ENCODE measurements at regions of chr3 and their contacts with region 1.

Region 1: DNA sequence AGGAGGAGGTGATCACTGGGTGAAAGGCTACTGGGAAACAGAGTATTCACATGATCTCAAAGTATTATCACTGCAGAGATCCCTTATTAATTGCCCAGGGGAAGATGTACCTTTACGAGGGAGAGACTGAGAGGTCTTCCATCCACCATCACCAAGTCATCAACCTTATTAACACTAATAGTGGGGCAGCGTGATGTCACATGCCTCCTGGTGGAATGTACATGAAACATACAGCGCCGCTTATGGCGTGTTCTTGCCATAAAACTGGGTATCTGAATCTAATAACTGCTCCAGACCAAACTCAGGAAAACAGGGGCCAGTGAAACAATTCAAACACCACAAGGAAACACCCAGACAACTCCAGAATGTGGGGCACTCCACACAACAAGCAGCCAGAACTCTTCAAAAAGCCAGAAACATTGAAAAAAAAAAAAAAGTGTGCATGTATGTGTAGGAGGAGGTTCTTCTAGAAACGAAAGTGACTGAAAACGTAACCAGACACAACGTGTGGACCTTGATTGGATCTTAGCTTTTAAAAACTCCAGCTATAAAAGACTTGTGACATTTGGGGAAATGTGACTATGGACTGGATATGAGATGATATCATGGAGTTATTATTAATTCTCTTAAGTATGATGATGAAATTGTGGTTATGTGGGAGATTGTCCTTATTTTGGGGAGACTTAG is 4.6 kb downstream of the STIMATE start:
- DNase-seq: no peak
- H3K4me3 Mint-ChIP-seq: peak overlapping the region; percentile 70
- H3K27ac Mint-ChIP-seq: peak overlapping the region; percentile 89
- H3K4me1 Mint-ChIP-seq: peaks cover 61% of the 10 kb centered on the region
- H3K27me3 Mint-ChIP-seq: no peaks in the 10 kb centered on the region

Region 2: GRCh38 chr3:52880474-52880873 is 12.3 kb before region 1 on chr3:
- CTCF ChIA-PET with region 1: interaction called, 19 read pairs
- DNase-seq: no peak
- H3K4me3 Mint-ChIP-seq: no peak overlapping the region
- H3K27ac Mint-ChIP-seq: no peak overlapping the region
- H3K4me1 Mint-ChIP-seq: peaks cover 5% of the 10 kb centered on the region
- H3K27me3 Mint-ChIP-seq: no peaks in the 10 kb centered on the region

Region 3: DNA sequence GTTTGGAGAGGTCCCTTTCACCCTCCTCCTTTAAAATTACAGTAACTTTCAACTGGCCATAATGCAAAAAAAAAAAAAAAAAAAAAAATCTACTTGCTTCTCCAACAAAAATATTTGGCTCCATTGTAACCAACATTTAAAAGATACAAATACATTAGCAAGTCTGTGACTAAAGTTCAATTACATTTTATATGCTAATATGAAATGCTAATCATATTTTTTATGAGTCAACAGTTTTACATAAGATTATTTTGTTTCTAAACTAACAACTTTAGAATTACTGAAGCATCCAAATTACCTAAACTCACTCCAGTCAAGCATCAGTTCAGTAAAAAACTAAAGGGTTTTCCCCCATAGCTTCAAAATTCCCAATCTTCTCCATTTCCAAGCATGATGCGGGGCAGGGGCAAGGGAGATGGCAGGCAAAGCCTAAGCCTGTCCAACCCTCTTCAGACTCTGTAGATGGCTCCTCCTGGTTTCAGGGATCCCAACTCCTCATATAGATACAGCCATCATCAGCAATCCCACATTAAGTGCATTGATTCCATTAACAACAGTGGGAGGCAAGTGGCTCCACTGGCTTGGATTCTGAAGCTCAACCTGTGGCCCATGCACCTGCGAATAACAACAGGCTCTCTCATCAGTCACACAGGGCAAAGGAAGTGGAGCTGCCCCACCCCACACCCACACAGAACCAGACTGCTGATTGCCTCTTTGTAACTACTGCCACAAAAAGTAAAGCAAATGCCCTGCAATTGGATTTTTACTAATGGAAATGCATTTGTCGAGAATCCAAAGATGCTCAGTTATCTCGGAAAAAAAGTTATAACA is 138.1 kb after region 1 on chr3:
- CTCF ChIA-PET with region 1: no interaction called
- DNase-seq: peak; percentile 61
- H3K4me3 Mint-ChIP-seq: no peak overlapping the region
- H3K27ac Mint-ChIP-seq: no peak overlapping the region
- H3K4me1 Mint-ChIP-seq: peaks cover 36% of the 10 kb centered on the region
- H3K27me3 Mint-ChIP-seq: no peaks in the 10 kb centered on the region

Region 4: GRCh38 chr3:53347261-53348064 is 454.7 kb after region 1 on chr3 and contains the start of gene DCP1A:
- CTCF ChIA-PET with region 1: no interaction called
- DNase-seq: peak; percentile 96
- H3K4me3 Mint-ChIP-seq: peak within 1 kb of the TSS; percentile 98
- H3K27ac Mint-ChIP-seq: peak within 1 kb of the TSS; percentile 97
- H3K4me1 Mint-ChIP-seq: peaks cover 30% of the 10 kb centered on the region
- H3K27me3 Mint-ChIP-seq: no peaks in the 10 kb centered on the region

Region 5: GRCh38 chr3:53531749-53532148 is 639.0 kb after region 1 on chr3:
- CTCF ChIA-PET with region 1: no interaction called
- DNase-seq: no peak
- H3K4me3 Mint-ChIP-seq: no peak overlapping the region
- H3K27ac Mint-ChIP-seq: no peak overlapping the region
- H3K4me1 Mint-ChIP-seq: no peaks in the 10 kb centered on the region
- H3K27me3 Mint-ChIP-seq: peaks cover 10% of the 10 kb centered on the region